CD4-positive, alpha-beta T cell (primary cell): ENCODE measurements at regions of chr13 and their contacts with region 1.

Region 1: GRCh38 chr13:30617315-30618185 is at the start of gene USPL1:
- DNase-seq: peak; percentile 97 to 100 (median 98)
- ATAC-seq: peak; percentile 87
- H3K4me3 ChIP-seq: peak within 1 kb of the TSS; percentile 89
- H3K4me3 Mint-ChIP-seq: no peak within 1 kb of the TSS
- H3K27ac ChIP-seq: peak within 1 kb of the TSS; percentile 95 to 99
- H3K27ac Mint-ChIP-seq: no peak within 1 kb of the TSS
- H3K4me1 ChIP-seq: peaks cover 7% of the 10 kb centered on the region
- H3K4me1 Mint-ChIP-seq: peaks cover 30% of the 10 kb centered on the region
- H3K27me3 ChIP-seq: no peaks in the 10 kb centered on the region
- H3K27me3 Mint-ChIP-seq: no peaks in the 10 kb centered on the region
- CTCF ChIP-seq: no peak
- total RNA-seq, gene USPL1: 41.2 to 42.0 TPM

Region 2: DNA sequence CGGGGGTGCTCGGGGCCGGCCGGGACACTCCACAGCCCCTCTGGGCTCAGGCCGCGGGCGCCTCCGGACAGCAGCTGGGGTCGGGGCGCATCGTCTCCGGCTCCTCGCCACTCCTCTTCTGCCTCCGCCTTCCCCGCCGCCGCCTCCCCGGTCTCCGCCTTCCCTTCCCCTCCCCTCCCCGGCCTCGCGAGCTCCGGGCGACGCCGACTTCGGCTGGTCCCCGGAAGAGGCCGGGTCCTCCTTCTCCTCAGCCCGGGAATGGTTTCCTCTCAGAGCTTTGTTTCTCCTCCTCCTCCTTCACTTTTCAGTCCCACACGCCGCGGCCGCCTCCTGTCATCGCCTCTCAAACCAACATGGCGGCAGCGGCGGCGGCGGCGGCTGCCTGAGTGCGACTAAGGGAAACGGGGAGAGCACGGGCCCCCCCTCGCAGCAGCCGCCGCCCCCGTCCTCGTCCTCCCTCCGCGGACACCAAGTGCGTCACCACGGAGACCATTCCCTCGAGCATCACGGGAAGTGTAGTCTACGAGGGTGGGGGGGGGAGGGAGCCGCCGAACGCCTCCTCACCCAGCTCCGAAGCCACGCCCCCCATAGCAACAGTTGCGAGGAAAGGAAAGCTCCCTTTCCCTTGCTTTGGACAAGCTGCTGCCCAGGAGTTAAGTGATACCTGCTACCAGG is 767.2 kb before region 1 on chr13 and contains the start of gene UBL3:
- CTCF ChIA-PET with region 1: no interaction called
- POLR2A ChIA-PET with region 1: interaction called, 25 read pairs
- intact Hi-C with region 1: loop called (anchors 1 to 5 kb)
- DNase-seq: peak; percentile 89 to 97 (median 93)
- ATAC-seq: peak; percentile 87
- H3K4me3 ChIP-seq: peak within 1 kb of the TSS; percentile 82
- H3K4me3 Mint-ChIP-seq: peak within 1 kb of the TSS; percentile 99
- H3K27ac ChIP-seq: peak within 1 kb of the TSS; percentile 92 to 93
- H3K27ac Mint-ChIP-seq: peak within 1 kb of the TSS; percentile 86
- H3K4me1 ChIP-seq: peaks cover 4% of the 10 kb centered on the region
- H3K4me1 Mint-ChIP-seq: peaks cover 20% of the 10 kb centered on the region
- H3K27me3 ChIP-seq: no peaks in the 10 kb centered on the region
- H3K27me3 Mint-ChIP-seq: no peaks in the 10 kb centered on the region
- CTCF ChIP-seq: no peak
- total RNA-seq, gene UBL3: 39.5 to 41.9 TPM

Region 3: DNA sequence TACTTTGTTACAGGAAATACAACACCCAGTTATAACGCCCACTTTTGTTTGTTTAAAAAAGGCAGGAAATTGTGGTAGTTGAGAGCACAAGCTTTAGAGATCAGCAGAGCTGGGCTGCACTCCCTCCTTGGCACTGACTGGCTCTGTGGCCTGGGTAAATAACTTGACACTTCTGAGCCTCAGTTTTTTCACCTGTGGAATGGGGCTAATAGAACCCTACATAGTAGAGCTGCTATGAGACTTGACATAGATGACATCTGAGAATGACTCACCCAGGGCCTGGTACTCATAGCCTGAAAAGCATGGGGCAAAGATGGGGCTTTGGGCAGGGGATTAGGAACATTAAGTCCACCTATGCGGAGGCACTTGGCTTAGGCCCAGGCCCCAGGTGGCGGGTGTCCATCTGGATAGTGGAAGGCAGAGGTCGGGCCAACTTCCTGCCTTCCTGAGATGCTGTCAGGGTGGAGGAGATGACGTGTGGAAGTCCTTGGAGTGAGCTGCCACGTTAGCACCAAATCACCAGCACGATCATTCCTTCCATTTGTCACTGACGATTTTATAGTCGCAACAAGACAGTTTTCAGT is 469.3 kb before region 1 on chr13:
- CTCF ChIA-PET with region 1: no interaction called
- POLR2A ChIA-PET with region 1: interaction called, 16 read pairs
- intact Hi-C with region 1: no loop called
- DNase-seq: peak in 12 of 14 experiments; percentile 24 to 91 (median 48)
- ATAC-seq: peak; percentile 91
- H3K4me3 ChIP-seq: no peak overlapping the region
- H3K4me3 Mint-ChIP-seq: peak overlapping the region; percentile 73
- H3K27ac ChIP-seq: peak overlapping the region; percentile 58 to 82
- H3K27ac Mint-ChIP-seq: peak overlapping the region; percentile 91
- H3K4me1 ChIP-seq: peaks cover 90% of the 10 kb centered on the region
- H3K4me1 Mint-ChIP-seq: peaks cover 94% of the 10 kb centered on the region
- H3K27me3 ChIP-seq: no peaks in the 10 kb centered on the region
- H3K27me3 Mint-ChIP-seq: no peaks in the 10 kb centered on the region
- CTCF ChIP-seq: no peak

Region 4: GRCh38 chr13:30395192-30396084 is 222.1 kb before region 1 on chr13:
- CTCF ChIA-PET with region 1: no interaction called
- POLR2A ChIA-PET with region 1: interaction called, 23 read pairs
- intact Hi-C with region 1: no loop called
- DNase-seq: peak; percentile 48 to 89 (median 73)
- ATAC-seq: peak; percentile 78
- H3K4me3 ChIP-seq: peak overlapping the region; percentile 62
- H3K4me3 Mint-ChIP-seq: peak overlapping the region; percentile 90
- H3K27ac ChIP-seq: peak overlapping the region; percentile 82 to 94
- H3K27ac Mint-ChIP-seq: peak overlapping the region; percentile 89
- H3K4me1 ChIP-seq: peaks cover 37% of the 10 kb centered on the region
- H3K4me1 Mint-ChIP-seq: peaks cover 58% of the 10 kb centered on the region
- H3K27me3 ChIP-seq: no peaks in the 10 kb centered on the region
- H3K27me3 Mint-ChIP-seq: no peaks in the 10 kb centered on the region
- CTCF ChIP-seq: no peak

Region 5: DNA sequence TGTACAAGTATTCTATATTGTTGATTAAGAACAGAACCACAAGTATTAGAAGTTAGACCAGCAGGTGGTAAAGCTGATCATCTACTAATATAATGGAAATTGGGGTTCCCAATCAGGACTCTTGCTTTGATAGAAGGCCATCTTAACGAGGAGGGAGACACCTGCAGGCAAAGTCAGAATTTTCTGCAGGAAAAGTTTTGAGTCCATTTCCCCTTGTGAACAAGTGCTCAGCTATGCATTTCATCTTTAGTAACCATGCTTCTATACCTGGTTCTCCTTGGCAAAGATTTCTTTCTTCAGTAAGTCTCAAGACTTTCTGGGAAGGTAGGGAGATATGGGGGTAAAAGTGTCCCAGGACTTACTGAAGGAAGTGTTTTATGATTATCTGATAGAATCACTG is 36.0 kb before region 1 on chr13:
- CTCF ChIA-PET with region 1: interaction called, 3 read pairs
- POLR2A ChIA-PET with region 1: interaction called, 18 read pairs
- intact Hi-C with region 1: loop called in 1 of 2 experiments (anchors 2 kb)
- DNase-seq: peak in 4 of 14 experiments; percentile 47 to 57 (median 48)
- ATAC-seq: no peak
- H3K4me3 ChIP-seq: no peak overlapping the region
- H3K4me3 Mint-ChIP-seq: no peak overlapping the region
- H3K27ac ChIP-seq: no peak overlapping the region
- H3K27ac Mint-ChIP-seq: no peak overlapping the region
- H3K4me1 ChIP-seq: peaks cover 10% of the 10 kb centered on the region
- H3K4me1 Mint-ChIP-seq: peaks cover 18% of the 10 kb centered on the region
- H3K27me3 ChIP-seq: no peaks in the 10 kb centered on the region
- H3K27me3 Mint-ChIP-seq: no peaks in the 10 kb centered on the region
- CTCF ChIP-seq: peak; percentile 28

Region 6: DNA sequence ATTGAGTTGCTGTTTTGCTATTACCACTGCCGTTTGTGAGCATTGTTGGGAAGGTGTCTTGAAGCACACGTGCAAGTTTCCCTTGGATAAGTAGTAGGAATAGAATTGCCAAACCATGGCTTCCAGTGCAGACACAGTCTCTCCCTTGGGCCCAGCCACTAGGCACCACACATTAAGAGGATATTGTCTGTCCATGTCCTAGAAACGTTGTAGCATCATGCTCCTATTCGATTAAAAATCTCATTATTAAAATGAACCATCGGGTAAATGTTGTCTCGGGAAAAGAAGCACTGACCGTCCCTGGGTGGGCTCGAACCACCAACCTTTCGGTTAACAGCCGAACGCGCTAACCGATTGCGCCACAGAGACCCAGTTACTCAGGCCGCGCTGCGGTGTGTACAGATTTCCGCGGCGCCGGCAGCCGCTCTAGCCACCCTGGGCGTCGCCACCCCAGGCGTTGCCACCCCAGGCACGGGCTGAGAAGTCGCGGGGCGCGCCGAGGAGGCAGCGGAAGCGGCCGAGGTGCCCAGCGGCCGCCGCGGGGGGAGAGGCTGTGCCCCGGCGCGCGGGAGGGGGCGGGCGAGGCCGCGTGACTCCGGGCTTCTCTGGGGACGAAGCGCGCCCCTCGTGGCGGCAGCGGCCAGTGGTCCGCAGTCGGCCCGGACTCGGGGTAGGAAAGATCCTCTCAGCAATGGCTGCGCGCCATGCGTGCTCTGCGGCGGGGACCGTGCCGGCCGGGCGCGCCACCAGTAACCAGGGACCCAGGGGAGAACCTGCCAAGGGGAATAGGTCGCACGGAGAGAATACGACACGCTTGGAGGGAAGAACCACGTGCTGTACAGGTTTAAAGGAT is 56.3 kb after region 1 on chr13:
- CTCF ChIA-PET with region 1: no interaction called
- POLR2A ChIA-PET with region 1: interaction called, 7 read pairs
- intact Hi-C with region 1: loop called in 1 of 2 experiments (anchors 2 kb)
- DNase-seq: peak; percentile 74 to 94 (median 85)
- ATAC-seq: peak; percentile 90
- H3K4me3 ChIP-seq: peak overlapping the region; percentile 61
- H3K4me3 Mint-ChIP-seq: peak overlapping the region; percentile 94
- H3K27ac ChIP-seq: peak overlapping the region in 1 of 2 donors; percentile 11
- H3K27ac Mint-ChIP-seq: peak overlapping the region; percentile 93
- H3K4me1 ChIP-seq: peaks cover 11% of the 10 kb centered on the region
- H3K4me1 Mint-ChIP-seq: peaks cover 25% of the 10 kb centered on the region
- H3K27me3 ChIP-seq: no peaks in the 10 kb centered on the region
- H3K27me3 Mint-ChIP-seq: peaks cover 6% of the 10 kb centered on the region
- CTCF ChIP-seq: peak; percentile 45

Region 7: GRCh38 chr13:30759748-30760147 is 142.2 kb after region 1 on chr13:
- CTCF ChIA-PET with region 1: no interaction called
- POLR2A ChIA-PET with region 1: no interaction called
- intact Hi-C with region 1: no loop called
- DNase-seq: no peak
- ATAC-seq: no peak
- H3K4me3 ChIP-seq: no peak overlapping the region
- H3K4me3 Mint-ChIP-seq: no peak overlapping the region
- H3K27ac ChIP-seq: no peak overlapping the region
- H3K27ac Mint-ChIP-seq: no peak overlapping the region
- H3K4me1 ChIP-seq: no peaks in the 10 kb centered on the region
- H3K4me1 Mint-ChIP-seq: no peaks in the 10 kb centered on the region
- H3K27me3 ChIP-seq: no peaks in the 10 kb centered on the region
- H3K27me3 Mint-ChIP-seq: no peaks in the 10 kb centered on the region
- CTCF ChIP-seq: no peak

Region 8: GRCh38 chr13:30818323-30818960 is 200.9 kb after region 1 on chr13:
- CTCF ChIA-PET with region 1: no interaction called
- POLR2A ChIA-PET with region 1: no interaction called
- intact Hi-C with region 1: no loop called
- DNase-seq: no peak
- ATAC-seq: no peak
- H3K4me3 ChIP-seq: no peak overlapping the region
- H3K4me3 Mint-ChIP-seq: no peak overlapping the region
- H3K27ac ChIP-seq: no peak overlapping the region
- H3K27ac Mint-ChIP-seq: no peak overlapping the region
- H3K4me1 ChIP-seq: no peaks in the 10 kb centered on the region
- H3K4me1 Mint-ChIP-seq: no peaks in the 10 kb centered on the region
- H3K27me3 ChIP-seq: peaks cover 0 to 3% of the 10 kb centered on the region in 2 experiments
- H3K27me3 Mint-ChIP-seq: peaks cover 21% of the 10 kb centered on the region
- CTCF ChIP-seq: no peak

Region 9: GRCh38 chr13:31161828-31162590 is 544.5 kb after region 1 on chr13 and contains the start of gene HSPH1:
- CTCF ChIA-PET with region 1: no interaction called
- POLR2A ChIA-PET with region 1: interaction called, 7 read pairs
- intact Hi-C with region 1: loop called in 1 of 2 experiments (anchors 2 kb)
- DNase-seq: peak; percentile 95 to 99 (median 98)
- ATAC-seq: peak; percentile 81
- H3K4me3 ChIP-seq: peak within 1 kb of the TSS; percentile 93
- H3K4me3 Mint-ChIP-seq: peak within 1 kb of the TSS; percentile 96
- H3K27ac ChIP-seq: peak within 1 kb of the TSS; percentile 94 to 95
- H3K27ac Mint-ChIP-seq: peak within 1 kb of the TSS; percentile 98
- H3K4me1 ChIP-seq: peaks cover 17% of the 10 kb centered on the region
- H3K4me1 Mint-ChIP-seq: peaks cover 46% of the 10 kb centered on the region
- H3K27me3 ChIP-seq: no peaks in the 10 kb centered on the region
- H3K27me3 Mint-ChIP-seq: no peaks in the 10 kb centered on the region
- CTCF ChIP-seq: peak; percentile 13
- total RNA-seq, gene HSPH1: 226 to 238 TPM